ENCODE measurements at regions of chr11 and their contacts with region 1.

Region 1: DNA sequence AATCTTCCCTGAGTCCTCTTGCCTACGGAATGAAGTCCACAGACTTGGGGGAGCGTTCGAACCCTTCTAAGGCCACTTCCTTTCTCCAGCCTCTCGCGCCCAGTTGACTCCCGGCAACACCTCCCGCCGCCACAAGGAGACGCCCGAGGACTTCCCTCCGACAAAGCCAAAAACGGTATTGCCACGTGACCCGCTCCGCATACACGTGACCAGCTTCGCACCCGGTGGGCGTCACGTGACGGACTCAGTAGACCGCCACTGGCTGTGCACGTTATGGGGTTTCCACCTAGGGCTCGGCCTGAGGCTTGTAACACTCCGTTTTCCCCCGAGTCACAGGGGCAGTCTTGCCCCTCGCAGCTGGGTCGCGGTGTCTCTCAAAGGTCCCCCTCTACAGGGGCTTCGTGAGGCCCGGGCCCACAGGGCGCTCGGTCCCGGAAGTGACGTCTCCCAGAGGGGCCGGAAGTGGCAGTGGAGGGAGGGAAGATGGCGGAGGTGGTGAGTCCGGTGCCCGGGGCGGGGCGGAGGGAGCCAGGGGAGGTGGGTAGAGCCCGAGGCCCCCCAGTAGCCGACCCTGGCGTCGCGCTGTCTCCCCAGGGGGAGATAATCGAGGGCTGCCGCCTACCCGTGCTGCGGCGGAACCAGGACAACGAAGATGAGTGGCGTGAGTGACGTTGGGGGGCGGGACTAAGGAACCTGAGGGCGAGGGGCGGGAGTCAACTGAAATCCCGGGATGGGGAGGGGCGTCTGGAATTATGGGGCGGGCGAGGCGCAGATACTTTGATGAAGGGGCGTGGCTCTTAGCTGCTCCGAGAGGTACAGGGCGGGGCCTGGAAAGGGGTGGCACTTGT is at the start of gene KAT5:
- DNase-seq: peak; percentile 95
- H3K4me3 ChIP-seq: peak within 1 kb of the TSS; percentile 62 to 72
- H3K27ac ChIP-seq: peak within 1 kb of the TSS; percentile 96 to 98
- H3K4me1 ChIP-seq: peaks cover 6 to 8% of the 10 kb centered on the region in 2 experiments; a peak in 1 of 4 replicates
- H3K27me3 ChIP-seq: no peaks in the 10 kb centered on the region
- CTCF ChIP-seq: peak; percentile 95
- EP300 ChIP-seq: peak in 1 of 2 experiments; percentile 34; a peak in 1 of 4 replicates
- RAD21 ChIP-seq: peak; percentile 96
- polyA plus RNA-seq, gene KAT5: 44.5 and 51.9 TPM in 2 replicates

Region 2: DNA sequence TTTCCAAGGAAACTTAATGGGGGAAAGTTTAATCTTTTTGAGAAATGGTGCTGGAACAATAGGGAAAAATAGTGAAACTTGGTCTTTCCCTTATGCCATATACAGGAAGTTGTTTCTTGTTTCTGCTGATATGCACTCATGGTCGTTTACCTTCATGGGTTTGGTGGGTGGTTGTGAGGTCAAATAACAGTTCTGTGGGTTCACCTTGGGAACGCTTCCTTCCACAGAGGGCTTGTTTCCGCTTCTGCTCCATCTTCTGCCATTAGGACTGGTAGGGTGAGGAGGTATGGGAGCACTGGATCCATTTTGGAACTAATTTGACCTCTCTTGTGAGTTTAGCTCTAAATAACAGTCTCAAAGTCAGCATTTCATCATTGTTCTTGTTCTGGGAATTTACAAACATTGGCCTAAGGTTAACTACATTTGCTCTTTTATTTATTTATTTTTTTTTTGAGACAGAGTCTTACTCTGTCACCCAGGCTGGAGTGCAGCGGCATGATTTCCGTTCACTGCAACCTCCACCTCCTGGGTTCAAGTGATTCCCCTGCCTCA is 31.7 kb before region 1 on chr11:
- CTCF ChIA-PET with region 1: no interaction called
- POLR2A ChIA-PET with region 1: no interaction called
- DNase-seq: no peak
- H3K4me3 ChIP-seq: no peak overlapping the region
- H3K27ac ChIP-seq: no peak overlapping the region
- H3K4me1 ChIP-seq: no peaks in the 10 kb centered on the region
- H3K27me3 ChIP-seq: peaks cover 9% of the 10 kb centered on the region
- CTCF ChIP-seq: no peak
- EP300 ChIP-seq: no peak
- RAD21 ChIP-seq: no peak

Region 3: GRCh38 chr11:65695456-65696241 is 16.4 kb before region 1 on chr11:
- CTCF ChIA-PET with region 1: interaction called, 25 read pairs
- POLR2A ChIA-PET with region 1: no interaction called
- DNase-seq: no peak
- H3K4me3 ChIP-seq: no peak overlapping the region
- H3K27ac ChIP-seq: no peak overlapping the region
- H3K4me1 ChIP-seq: no peaks in the 10 kb centered on the region
- H3K27me3 ChIP-seq: peaks cover 14% of the 10 kb centered on the region; the same call in 1 of the 2 replicates
- CTCF ChIP-seq: no peak
- EP300 ChIP-seq: no peak
- RAD21 ChIP-seq: no peak

Region 4: GRCh38 chr11:65779851-65780577 is 68.0 kb after region 1 on chr11:
- CTCF ChIA-PET with region 1: interaction called, 46 read pairs
- POLR2A ChIA-PET with region 1: interaction called, 5 read pairs
- DNase-seq: peak; percentile 87
- H3K4me3 ChIP-seq: peak overlapping the region; percentile 62 to 70
- H3K27ac ChIP-seq: peak overlapping the region in 1 of 2 experiments; percentile 35; a peak in 2 of 4 replicates
- H3K4me1 ChIP-seq: peaks cover 0 to 13% of the 10 kb centered on the region in 2 experiments; a peak in 1 of 4 replicates
- H3K27me3 ChIP-seq: no peaks in the 10 kb centered on the region
- CTCF ChIP-seq: peak; percentile 71
- EP300 ChIP-seq: no peak
- RAD21 ChIP-seq: peak; percentile 12; the same call in 1 of the 2 replicates

Region 5: GRCh38 chr11:65797711-65798110 is 85.7 kb after region 1 on chr11:
- CTCF ChIA-PET with region 1: interaction called, 14 read pairs
- POLR2A ChIA-PET with region 1: no interaction called
- DNase-seq: no peak
- H3K4me3 ChIP-seq: no peak overlapping the region
- H3K27ac ChIP-seq: no peak overlapping the region
- H3K4me1 ChIP-seq: no peaks in the 10 kb centered on the region
- H3K27me3 ChIP-seq: peaks cover 9% of the 10 kb centered on the region
- CTCF ChIP-seq: no peak
- EP300 ChIP-seq: no peak
- RAD21 ChIP-seq: no peak

Region 6: GRCh38 chr11:65817835-65818742 is 106.1 kb after region 1 on chr11:
- CTCF ChIA-PET with region 1: interaction called, 111 read pairs
- POLR2A ChIA-PET with region 1: interaction called, 23 read pairs
- DNase-seq: peak; percentile 99
- H3K4me3 ChIP-seq: peak overlapping the region; percentile 62 to 75
- H3K27ac ChIP-seq: peak overlapping the region in 1 of 2 experiments; percentile 62; a peak in 1 of 4 replicates
- H3K4me1 ChIP-seq: peaks cover 0 to 3% of the 10 kb centered on the region in 2 experiments; a peak in 1 of 4 replicates
- H3K27me3 ChIP-seq: no peaks in the 10 kb centered on the region
- CTCF ChIP-seq: peak; percentile 91
- EP300 ChIP-seq: no peak
- RAD21 ChIP-seq: peak; percentile 89

Region 7: DNA sequence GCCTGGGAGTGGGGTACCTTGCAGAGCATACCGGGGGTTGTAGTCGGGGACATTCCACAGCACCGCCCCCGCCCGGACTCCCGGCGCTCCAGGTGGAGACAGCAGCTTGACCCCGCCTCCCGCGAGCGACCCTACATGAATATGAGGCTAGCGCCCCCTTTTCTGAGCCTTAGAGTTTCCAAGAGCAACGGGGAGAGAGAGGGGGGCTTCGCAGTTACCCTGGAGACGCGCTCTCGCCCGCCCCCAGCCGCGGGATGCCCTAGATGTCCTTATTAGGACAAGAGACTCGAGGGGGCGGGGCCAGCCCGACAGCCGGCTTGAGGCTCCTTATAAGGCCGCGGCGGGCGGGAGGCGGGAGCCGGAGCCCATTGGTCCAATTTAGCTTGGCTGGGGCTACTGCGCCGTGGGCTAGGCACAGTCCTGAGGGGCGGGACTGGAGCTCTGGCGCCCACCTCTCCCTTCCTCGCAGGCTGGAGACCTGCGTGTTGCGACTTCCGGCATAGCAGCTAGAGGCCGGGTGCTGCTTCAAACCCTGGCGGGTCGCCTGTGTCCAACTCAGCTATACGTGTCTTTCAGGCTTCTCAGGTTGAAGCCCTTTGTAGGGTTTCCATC is 147.3 kb after region 1 on chr11:
- CTCF ChIA-PET with region 1: interaction called, 27 read pairs
- POLR2A ChIA-PET with region 1: interaction called, 7 read pairs
- DNase-seq: peak; percentile 90
- H3K4me3 ChIP-seq: peak overlapping the region; percentile 97 to 99
- H3K27ac ChIP-seq: peak overlapping the region; percentile 93
- H3K4me1 ChIP-seq: peaks cover 10 to 29% of the 10 kb centered on the region in 2 experiments
- H3K27me3 ChIP-seq: no peaks in the 10 kb centered on the region
- CTCF ChIP-seq: peak; percentile 25; the same call in 1 of the 2 replicates
- EP300 ChIP-seq: peak in 1 of 2 experiments; percentile 20; a peak in 1 of 4 replicates
- RAD21 ChIP-seq: no peak

Region 8: DNA sequence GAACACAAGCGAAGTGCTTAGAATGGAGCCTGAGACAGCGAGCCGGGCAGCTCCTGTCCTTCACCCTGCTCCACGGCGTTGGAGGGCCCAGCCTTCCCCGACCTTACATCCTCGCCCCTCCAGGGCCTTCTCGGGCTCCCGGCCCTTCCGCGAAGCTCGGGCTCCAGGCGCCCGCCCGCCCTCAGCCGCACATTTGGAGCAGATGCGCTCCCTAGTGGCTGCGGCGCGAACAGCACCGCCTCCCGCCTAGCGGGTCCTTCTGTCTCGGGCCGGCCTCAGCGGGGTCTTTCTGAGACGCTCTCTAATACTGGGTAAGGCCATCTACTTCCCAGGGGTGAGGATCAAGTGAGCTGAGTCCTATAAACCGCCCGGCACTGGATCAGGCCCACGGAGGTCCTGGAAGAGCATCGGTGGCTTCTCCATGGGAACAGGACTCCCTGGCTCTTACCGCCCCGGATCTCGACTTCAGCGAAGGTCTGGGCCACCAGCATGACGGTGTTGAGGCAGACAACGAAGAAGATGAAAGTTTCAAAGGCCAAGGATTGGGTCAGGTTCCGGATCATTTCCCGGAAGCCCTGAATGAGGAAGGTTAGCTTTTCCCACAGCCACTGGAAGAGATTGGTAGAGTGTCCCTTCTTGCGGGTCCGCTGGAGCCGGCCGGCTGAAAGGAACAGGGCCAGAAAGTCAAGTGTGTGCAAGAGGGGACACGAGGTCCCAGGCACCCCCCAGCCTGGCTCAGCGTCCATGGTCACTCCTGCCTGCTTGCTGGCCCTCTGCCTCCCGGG is 310.6 kb after region 1 on chr11:
- CTCF ChIA-PET with region 1: interaction called, 12 read pairs
- POLR2A ChIA-PET with region 1: no interaction called
- DNase-seq: peak; percentile 95
- H3K4me3 ChIP-seq: peak overlapping the region; percentile 17 to 29; a peak in 2 of 4 replicates
- H3K27ac ChIP-seq: no peak overlapping the region
- H3K4me1 ChIP-seq: peaks cover 3 to 21% of the 10 kb centered on the region in 2 experiments; a peak in 3 of 4 replicates
- H3K27me3 ChIP-seq: no peaks in the 10 kb centered on the region
- CTCF ChIP-seq: peak; percentile 90
- EP300 ChIP-seq: no peak
- RAD21 ChIP-seq: peak; percentile 67